ENCODE measurements at regions of chr17 and their contacts with region 1.

Region 1: GRCh38 chr17:49315551-49316257 is 46.3 kb downstream of the ZNF652 start:
- DNase-seq: peak; percentile 91 to 97
- ATAC-seq: peak; percentile 99
- H3K4me3 ChIP-seq: no peak overlapping the region; the same call in 2 of the 3 replicates
- H3K27ac ChIP-seq: peak overlapping the region; percentile 8 to 56; a peak in 4 of 6 replicates
- H3K4me1 ChIP-seq: peaks cover 13% of the 10 kb centered on the region
- CTCF ChIP-seq: peak; percentile 99
- EP300 ChIP-seq: no peak
- POLR2A ChIP-seq: no peak
- RAD21 ChIP-seq: peak; percentile 99 to 100

Region 2: GRCh38 chr17:49327835-49328784 is 12.4 kb after region 1 on chr17:
- CTCF ChIA-PET with region 1: interaction called, 27 read pairs
- POLR2A ChIA-PET with region 1: no interaction called
- DNase-seq: no peak
- ATAC-seq: no peak
- H3K4me3 ChIP-seq: no peak overlapping the region
- H3K27ac ChIP-seq: no peak overlapping the region
- H3K4me1 ChIP-seq: 0 out of 3 replicates have a peak, but pooled peaks cover 2% of the 10 kb centered on the region
- CTCF ChIP-seq: no peak
- EP300 ChIP-seq: no peak
- POLR2A ChIP-seq: no peak
- RAD21 ChIP-seq: no peak

Region 3: GRCh38 chr17:49343273-49343672 is 27.6 kb after region 1 on chr17:
- CTCF ChIA-PET with region 1: interaction called, 24 read pairs
- POLR2A ChIA-PET with region 1: interaction called, 5 read pairs
- DNase-seq: no peak
- ATAC-seq: no peak
- H3K4me3 ChIP-seq: no peak overlapping the region
- H3K27ac ChIP-seq: no peak overlapping the region
- H3K4me1 ChIP-seq: no peaks in the 10 kb centered on the region
- CTCF ChIP-seq: no peak
- EP300 ChIP-seq: no peak
- POLR2A ChIP-seq: no peak
- RAD21 ChIP-seq: no peak

Region 4: GRCh38 chr17:49361902-49362722 is 46.4 kb after region 1 on chr17 and contains the start of gene ZNF652:
- CTCF ChIA-PET with region 1: interaction called, 26 read pairs
- POLR2A ChIA-PET with region 1: interaction called, 4 read pairs
- DNase-seq: peak; percentile 96 to 97
- ATAC-seq: peak; percentile 80 to 81
- H3K4me3 ChIP-seq: peak within 1 kb of the TSS; percentile 94
- H3K27ac ChIP-seq: peak within 1 kb of the TSS; percentile 87 to 96
- H3K4me1 ChIP-seq: peaks cover 28% of the 10 kb centered on the region
- CTCF ChIP-seq: no peak
- EP300 ChIP-seq: no peak; a peak in 1 of 5 replicates
- POLR2A ChIP-seq: peak; percentile 39
- RAD21 ChIP-seq: no peak
- polyA plus RNA-seq, gene ZNF652: 13.1 and 14.8 TPM in 2 replicates

Region 5: DNA sequence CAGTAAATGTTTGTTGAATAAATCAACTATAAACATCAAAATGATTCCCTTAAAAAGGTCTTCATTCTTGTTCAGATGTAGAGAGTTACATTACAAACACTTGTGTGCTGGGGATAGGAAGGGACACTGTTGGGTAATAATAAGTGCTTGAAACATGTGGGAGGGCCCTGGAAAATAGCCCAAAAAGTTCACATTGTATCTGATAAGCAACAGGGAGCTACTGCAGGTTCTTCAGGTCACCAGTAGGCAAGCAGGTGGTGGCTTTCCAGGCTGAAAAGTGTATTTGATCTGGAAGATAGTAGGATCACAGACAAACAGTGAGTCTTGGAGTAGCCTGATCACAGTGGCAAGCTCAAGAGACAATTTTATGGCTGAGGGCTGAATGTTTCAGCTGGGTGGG is 65.4 kb after region 1 on chr17:
- CTCF ChIA-PET with region 1: interaction called, 417 read pairs
- POLR2A ChIA-PET with region 1: no interaction called
- DNase-seq: no peak
- ATAC-seq: no peak
- H3K4me3 ChIP-seq: no peak overlapping the region
- H3K27ac ChIP-seq: no peak overlapping the region
- H3K4me1 ChIP-seq: no peaks in the 10 kb centered on the region
- CTCF ChIP-seq: no peak
- EP300 ChIP-seq: no peak
- POLR2A ChIP-seq: no peak
- RAD21 ChIP-seq: no peak

Region 6: DNA sequence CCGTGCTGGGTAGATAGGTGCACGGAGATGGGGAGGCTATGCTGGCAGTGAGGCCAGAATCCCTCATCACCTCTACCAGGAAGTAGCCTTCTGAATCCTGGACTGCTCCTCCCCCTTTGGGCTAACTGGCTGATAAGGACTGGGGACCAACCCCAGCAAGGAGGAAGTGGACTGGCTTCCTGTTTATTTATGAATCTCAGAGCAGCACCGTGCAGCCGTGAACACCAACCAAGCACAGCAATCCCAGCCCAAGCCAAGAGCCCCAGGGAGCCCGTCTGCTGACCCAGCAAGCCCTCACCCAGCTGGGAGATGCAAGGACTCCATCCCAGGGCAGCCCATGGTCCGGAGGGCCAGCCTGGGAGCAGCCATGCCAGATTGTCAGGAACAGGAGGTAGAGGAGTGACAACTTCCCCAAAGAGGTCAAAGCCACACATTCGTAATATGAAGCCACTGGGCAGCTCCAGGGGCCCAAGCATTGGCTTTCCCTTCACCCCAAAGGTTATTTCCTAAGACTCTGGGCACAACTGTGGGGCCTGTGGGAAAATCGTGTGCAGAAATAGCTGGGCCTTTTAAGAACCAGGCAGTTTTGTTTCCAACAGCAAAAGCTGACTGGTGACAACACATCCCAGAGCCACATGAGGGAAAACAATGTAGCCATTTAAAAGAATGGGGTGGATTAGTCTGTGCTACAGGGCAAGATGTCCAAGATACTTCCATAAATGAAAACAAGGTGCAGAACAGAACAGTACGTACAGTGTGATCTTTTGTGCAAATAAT is 75.0 kb after region 1 on chr17:
- CTCF ChIA-PET with region 1: interaction called, 417 read pairs
- POLR2A ChIA-PET with region 1: no interaction called
- DNase-seq: no peak
- ATAC-seq: no peak
- H3K4me3 ChIP-seq: no peak overlapping the region
- H3K27ac ChIP-seq: peak overlapping the region; percentile 11 to 29; a peak in 1 of 6 replicates
- H3K4me1 ChIP-seq: peaks cover 10% of the 10 kb centered on the region; the same call in 1 of the 3 replicates
- CTCF ChIP-seq: no peak
- EP300 ChIP-seq: no peak
- POLR2A ChIP-seq: no peak
- RAD21 ChIP-seq: no peak

Region 7: DNA sequence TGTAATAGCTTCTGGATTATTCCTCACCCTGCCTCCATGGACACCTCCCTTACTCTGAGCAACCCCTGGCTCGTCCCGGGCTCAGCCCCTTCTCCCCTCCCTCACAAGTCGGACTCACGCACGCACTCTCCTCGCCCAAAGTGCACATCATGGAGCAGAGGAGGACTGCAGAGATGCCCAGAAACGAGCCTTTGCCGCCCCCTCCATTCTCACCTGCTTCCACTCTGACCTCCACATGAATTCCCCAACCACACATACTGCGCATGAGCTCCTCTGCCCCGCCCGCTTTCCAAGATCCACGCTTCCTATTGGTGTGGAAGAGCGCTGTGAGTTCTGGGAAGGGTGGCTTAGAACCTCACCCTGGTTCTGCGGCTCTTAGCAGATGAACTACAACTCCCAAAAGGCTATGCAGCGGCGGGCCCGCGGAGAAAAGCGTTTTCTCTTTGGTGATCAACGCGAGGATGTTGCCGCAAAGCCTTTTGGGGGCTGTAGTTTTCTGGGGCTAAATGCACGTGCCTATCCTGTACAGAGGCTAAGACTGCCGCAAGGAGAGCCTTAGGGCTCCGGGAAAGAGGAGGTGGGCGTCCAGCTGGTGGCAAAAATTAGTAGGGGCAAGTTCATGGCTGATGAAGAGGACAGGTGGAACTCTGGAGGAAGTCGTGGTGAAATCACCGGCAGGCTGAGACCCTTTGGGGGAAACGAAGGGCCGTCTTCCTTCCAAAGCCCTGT is 99.1 kb after region 1 on chr17 and contains the start of gene PHB1:
- CTCF ChIA-PET with region 1: interaction called, 42 read pairs
- POLR2A ChIA-PET with region 1: no interaction called
- DNase-seq: peak; percentile 98 to 100
- ATAC-seq: peak; percentile 100
- H3K4me3 ChIP-seq: peak within 1 kb of the TSS; percentile 69
- H3K27ac ChIP-seq: peak within 1 kb of the TSS; percentile 76 to 90
- H3K4me1 ChIP-seq: peaks cover 11% of the 10 kb centered on the region
- CTCF ChIP-seq: no peak
- EP300 ChIP-seq: no peak
- POLR2A ChIP-seq: peak; percentile 89
- RAD21 ChIP-seq: no peak
- polyA plus RNA-seq, gene PHB1: 480 and 556 TPM in 2 replicates

Region 8: GRCh38 chr17:49634485-49634860 is 318.8 kb after region 1 on chr17:
- CTCF ChIA-PET with region 1: no interaction called
- POLR2A ChIA-PET with region 1: no interaction called
- DNase-seq: no peak
- ATAC-seq: no peak
- H3K4me3 ChIP-seq: no peak overlapping the region
- H3K27ac ChIP-seq: no peak overlapping the region
- H3K4me1 ChIP-seq: peaks cover 18% of the 10 kb centered on the region
- CTCF ChIP-seq: no peak
- EP300 ChIP-seq: no peak
- POLR2A ChIP-seq: no peak
- RAD21 ChIP-seq: no peak